HEK293 (cell line): ENCODE measurements at regions of chr2 and their contacts with region 1.

Region 1: GRCh38 chr2:16756831-16757644 is 91.4 kb upstream of the CYRIA start:
- H3K4me3 ChIP-seq: no peak overlapping the region
- H3K27ac ChIP-seq: no peak overlapping the region
- H3K4me1 ChIP-seq: no peaks in the 10 kb centered on the region
- CTCF ChIP-seq: peak; percentile 81

Region 2: GRCh38 chr2:16525265-16525887 is 231.7 kb before region 1 on chr2:
- CTCF ChIA-PET with region 1: interaction called, 11 read pairs
- POLR2A ChIA-PET with region 1: no interaction called
- H3K4me3 ChIP-seq: no peak overlapping the region
- H3K27ac ChIP-seq: no peak overlapping the region
- H3K4me1 ChIP-seq: no peaks in the 10 kb centered on the region
- CTCF ChIP-seq: peak; percentile 42; the same call in 1 of the 2 replicates

Region 3: DNA sequence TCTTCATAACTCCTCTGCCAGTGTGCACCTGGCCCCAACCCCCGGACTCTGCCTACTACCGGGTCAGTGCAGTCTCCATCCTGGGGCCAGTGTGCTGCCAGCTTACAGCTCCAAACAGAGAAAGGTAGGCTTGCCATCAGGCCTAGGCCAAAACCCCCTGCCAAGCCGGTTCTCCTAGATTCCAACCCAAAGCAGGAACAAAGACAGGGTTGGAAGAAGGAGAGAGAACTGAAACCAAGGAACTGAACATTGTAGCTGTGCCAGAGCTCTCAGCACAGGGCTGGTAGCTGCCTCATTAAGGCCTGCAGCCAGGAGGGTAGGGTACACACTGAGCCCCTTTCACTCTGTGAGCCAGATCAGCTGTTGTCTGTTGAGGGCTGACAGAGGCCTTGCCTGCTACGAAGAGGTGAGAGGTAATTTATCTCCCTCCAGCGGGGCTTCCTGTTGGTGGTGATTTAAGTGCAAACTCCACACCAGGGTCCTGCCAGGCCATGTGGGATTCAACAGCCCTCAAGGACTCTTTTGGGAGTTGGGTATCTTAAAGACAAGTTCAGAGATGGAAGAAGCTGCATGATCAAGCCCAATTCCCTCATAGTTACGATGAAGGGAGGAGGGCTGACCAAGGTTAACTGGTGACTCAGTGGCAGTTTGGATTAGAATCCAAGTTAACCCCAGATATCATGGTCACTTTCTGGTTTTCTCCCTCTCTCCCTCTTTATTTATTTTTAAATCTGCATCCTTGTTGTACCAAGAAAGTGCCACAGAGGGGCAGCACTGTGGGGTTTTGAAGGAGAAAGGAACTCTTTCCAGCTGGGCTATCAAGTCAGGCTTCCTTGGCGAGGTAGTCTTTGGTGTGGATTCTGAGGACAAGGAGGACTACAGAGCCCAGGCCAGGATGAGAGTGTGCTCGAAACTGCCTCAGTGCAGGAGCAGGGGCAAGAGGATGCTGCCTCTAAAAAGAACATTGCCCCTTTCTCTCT is 139.5 kb before region 1 on chr2:
- CTCF ChIA-PET with region 1: interaction called, 135 read pairs
- POLR2A ChIA-PET with region 1: no interaction called
- H3K4me3 ChIP-seq: no peak overlapping the region
- H3K27ac ChIP-seq: no peak overlapping the region
- H3K4me1 ChIP-seq: peaks cover 11% of the 10 kb centered on the region
- CTCF ChIP-seq: no peak

Region 4: DNA sequence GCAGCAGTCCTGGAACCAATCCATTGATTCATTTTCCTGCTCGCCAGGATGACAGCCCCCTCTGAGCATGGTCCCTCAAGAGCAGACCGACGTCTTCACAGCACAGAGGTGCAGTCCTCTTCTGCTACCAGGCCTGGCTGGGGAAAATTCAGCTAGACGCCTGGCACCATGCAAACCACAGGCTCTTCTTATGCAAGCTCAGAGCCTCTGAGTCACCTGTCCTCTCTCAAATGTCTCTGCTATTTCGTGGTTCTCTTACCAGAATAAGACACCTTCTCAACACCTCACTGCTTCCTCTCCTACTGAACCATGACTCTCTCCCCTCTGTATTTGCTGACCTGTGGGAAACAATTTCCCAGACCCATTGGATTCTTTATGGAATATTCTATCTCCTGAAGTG is 11.6 kb before region 1 on chr2:
- CTCF ChIA-PET with region 1: interaction called, 15 read pairs
- POLR2A ChIA-PET with region 1: no interaction called
- H3K4me3 ChIP-seq: no peak overlapping the region
- H3K27ac ChIP-seq: no peak overlapping the region
- H3K4me1 ChIP-seq: no peaks in the 10 kb centered on the region
- CTCF ChIP-seq: no peak

Region 5: DNA sequence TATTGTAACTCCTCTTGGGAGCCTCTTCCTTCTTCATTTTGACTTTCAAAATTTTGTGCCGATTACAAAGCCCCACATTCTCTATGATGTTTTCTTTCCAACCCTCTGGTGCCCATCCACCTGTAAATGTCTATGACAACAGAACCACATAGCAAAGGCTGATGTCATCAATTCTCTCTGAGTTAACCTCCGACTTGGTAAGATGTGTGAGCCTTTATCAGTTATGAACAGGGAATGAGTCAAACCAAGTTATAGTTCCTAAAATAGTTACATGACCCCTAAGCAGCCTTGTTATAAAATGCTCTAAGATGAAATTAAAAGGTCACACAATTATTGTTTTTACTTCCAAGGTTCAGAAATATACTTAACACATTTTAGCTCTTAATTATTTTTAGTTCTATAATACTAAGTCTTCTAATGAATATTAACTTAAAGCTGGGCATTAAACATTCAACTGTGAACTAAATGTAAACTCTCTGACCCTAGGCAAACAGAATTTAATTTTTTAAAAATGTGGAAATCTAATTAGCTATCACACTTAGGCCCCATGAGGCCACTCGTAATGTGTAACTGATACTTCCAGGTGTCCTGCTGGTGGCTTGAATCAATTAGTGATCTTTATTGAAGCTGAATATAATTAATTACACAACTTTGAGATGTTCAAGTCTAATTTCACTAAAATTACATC is 10.9 kb after region 1 on chr2:
- CTCF ChIA-PET with region 1: interaction called, 13 read pairs
- POLR2A ChIA-PET with region 1: no interaction called
- H3K4me3 ChIP-seq: no peak overlapping the region
- H3K27ac ChIP-seq: no peak overlapping the region
- H3K4me1 ChIP-seq: no peaks in the 10 kb centered on the region
- CTCF ChIP-seq: no peak

Region 6: DNA sequence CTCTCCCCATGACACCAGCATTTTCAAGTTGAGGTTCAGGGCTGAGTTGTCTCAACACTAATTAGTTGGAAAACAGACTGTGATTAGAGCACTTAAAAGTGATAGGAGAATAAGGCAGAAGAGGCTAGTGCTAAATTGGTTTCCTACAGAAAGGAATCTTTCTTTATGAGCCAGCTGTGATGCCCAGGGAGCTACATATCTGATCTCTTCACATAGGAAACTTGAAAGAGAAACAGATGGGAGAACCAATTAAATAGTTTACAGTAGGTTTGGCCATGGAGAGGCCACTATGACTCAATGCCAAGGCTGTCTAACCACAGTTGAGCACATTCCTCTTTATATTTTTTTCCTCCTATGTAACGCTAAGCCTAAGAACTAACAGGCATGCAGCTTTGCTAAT is 326.9 kb after region 1 on chr2:
- CTCF ChIA-PET with region 1: no interaction called
- POLR2A ChIA-PET with region 1: no interaction called
- H3K4me3 ChIP-seq: no peak overlapping the region
- H3K27ac ChIP-seq: no peak overlapping the region
- H3K4me1 ChIP-seq: no peaks in the 10 kb centered on the region
- CTCF ChIP-seq: no peak

Region 7: DNA sequence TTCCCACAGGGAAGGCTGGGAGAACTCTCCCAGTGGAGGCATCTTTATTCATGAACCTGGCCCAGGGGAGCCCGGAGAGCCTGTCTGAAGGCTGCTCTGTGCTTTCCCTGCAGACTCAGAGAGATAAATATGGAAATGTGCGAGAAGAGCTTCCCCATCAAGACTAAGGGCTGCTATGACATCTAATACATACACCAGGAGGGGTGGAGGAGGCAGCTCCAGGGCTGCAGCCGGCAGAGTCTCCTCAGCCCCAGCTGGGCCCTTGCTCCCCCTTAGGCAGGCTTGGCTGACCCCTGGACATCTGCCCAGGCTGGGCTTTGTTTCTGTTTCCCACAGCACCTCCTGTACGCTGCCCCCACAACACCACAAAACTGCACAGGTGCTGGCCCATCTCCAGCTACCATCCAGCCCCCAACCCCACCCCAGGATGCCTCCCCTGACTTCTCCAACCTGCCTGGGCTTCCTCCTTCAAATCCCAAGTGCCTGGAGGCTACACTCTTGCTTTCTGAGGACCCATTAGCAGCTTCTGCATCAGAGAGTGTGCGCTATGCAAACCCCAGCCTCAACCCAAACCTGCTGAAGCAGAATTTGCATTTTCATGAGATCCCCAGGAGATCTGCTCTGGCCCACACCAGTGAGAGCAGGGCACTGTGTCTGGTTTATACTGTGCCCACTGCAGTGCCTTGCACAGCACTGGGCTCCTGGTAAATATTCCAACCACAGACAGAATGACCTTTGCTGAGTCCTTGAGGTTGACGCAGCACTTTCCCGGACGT is 880.3 kb after region 1 on chr2:
- CTCF ChIA-PET with region 1: no interaction called
- POLR2A ChIA-PET with region 1: no interaction called
- H3K4me3 ChIP-seq: no peak overlapping the region
- H3K27ac ChIP-seq: no peak overlapping the region
- H3K4me1 ChIP-seq: no peaks in the 10 kb centered on the region
- CTCF ChIP-seq: no peak